ENCODE measurements at regions of chr2 and their contacts with region 1.

Region 1: DNA sequence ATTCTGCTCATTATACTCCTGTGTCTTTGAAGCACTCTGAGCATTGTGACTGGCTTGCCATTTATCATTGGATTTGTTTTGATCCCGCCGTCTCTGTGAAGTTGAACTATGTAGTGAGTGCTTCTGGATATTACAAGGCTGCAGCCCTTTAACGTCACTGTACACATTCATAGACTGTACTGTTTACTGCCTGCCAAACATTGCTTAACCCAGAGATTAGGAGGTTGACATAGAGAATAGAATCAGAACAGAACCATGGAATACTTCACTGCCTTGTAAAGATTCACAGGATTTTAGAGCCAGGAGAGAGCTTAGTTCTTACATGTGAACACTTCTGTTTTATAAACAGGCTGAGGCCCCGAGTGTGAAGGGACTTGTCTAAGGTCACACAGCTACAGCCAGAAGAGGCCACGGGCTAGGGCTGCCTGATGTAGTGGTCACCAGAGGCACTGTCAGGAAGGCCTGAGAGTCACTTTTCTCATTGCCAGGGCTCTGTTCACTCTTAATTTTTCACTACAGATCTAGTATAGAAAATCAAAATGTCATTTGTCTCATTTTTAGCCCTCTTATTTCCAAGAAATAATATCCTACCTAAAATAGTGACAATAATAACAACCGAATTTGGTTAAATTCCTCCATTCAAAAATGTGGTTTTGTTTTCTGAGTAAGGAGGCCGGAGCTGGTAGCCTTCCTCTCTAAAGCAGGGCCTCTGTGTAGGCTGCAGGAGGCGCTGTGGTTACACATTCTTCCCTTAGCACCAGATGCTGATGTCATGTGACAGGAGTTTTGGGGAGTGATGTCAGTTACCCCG is 87.9 kb downstream of the UGGT1 start:
- DNase-seq: peak; percentile 63 to 80 (median 76)
- H3K4me3 ChIP-seq: no peak overlapping the region
- H3K4me3 Mint-ChIP-seq: no peak overlapping the region
- H3K27ac ChIP-seq: peak overlapping the region; percentile 18 to 24
- H3K27ac Mint-ChIP-seq: peak overlapping the region in 5 of 7 donors; percentile 28 to 74 (median 46)
- H3K4me1 ChIP-seq: no peaks in the 10 kb centered on the region
- H3K4me1 Mint-ChIP-seq: peaks cover 3% of the 10 kb centered on the region
- H3K27me3 ChIP-seq: no peaks in the 10 kb centered on the region
- H3K27me3 Mint-ChIP-seq: no peaks in the 10 kb centered on the region
- CTCF ChIP-seq: peak; percentile 80

Region 2: GRCh38 chr2:128027801-128028667 is 150.8 kb before region 1 on chr2 and contains the start of gene SAP130:
- intact Hi-C with region 1: no loop called
- DNase-seq: peak; percentile 92 to 95 (median 93)
- H3K4me3 ChIP-seq: peak within 1 kb of the TSS; percentile 86 to 95 (median 92)
- H3K4me3 Mint-ChIP-seq: peak within 1 kb of the TSS; percentile 93 to 95
- H3K27ac ChIP-seq: peak within 1 kb of the TSS; percentile 58 to 83
- H3K27ac Mint-ChIP-seq: peak within 1 kb of the TSS; percentile 78 to 93 (median 89)
- H3K4me1 ChIP-seq: peaks cover 18 to 19% of the 10 kb centered on the region in 2 donors
- H3K4me1 Mint-ChIP-seq: peaks cover 22% of the 10 kb centered on the region
- H3K27me3 ChIP-seq: no peaks in the 10 kb centered on the region
- H3K27me3 Mint-ChIP-seq: peaks cover 0 to 4% (median 4%) of the 10 kb centered on the region in 3 donors
- CTCF ChIP-seq: no peak
- polyA plus RNA-seq, gene SAP130: 2.8 to 16.4 (median 6.4) TPM

Region 3: DNA sequence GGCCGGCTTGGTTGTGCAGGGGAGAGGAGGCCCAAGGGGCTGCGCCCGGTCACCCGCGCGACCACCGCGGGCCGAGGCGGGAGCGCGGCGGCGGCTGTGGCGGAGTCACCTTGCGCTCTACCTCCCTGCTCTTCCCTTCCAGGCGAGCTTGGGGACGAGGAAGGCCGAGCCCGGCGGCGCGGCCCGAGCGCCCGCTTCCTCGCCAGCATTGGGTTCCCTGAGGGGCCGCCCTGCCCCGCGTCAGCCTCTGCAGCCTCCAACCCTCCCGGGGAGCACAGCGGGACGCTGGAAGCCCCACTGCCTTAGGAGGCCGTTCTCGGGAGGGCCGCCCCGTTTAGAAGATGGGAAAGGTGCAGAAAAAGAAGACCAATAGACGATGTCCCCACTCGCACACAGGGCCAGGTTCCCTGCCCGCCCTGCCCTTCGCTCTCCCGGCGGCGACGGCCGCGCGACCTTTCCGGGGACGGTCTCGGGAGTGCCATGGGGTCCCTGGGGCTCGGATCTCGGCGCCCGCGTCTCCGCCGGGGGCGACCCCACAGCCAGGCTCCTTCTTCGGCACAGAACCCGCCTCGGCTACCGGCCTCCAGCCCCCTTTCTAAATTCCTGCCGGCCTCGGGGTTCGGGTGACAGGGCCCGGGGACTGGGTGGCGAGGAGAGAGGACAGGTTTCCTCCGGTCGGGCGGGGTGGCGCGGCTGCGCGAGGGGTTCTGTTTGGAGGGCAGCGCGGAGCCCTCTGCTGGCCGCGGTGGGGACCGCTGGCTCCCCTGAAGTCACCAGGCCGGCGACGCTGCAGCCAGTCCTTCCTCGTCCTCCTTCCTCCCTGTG is 54.3 kb after region 1 on chr2:
- intact Hi-C with region 1: loop called (anchors 2 kb)
- DNase-seq: peak; percentile 78 to 82 (median 78)
- H3K4me3 ChIP-seq: peak overlapping the region; percentile 51 to 85 (median 81)
- H3K4me3 Mint-ChIP-seq: peak overlapping the region; percentile 81 to 90
- H3K27ac ChIP-seq: peak overlapping the region in 1 of 2 donors; percentile 80
- H3K27ac Mint-ChIP-seq: peak overlapping the region in 4 of 7 donors; percentile 50 to 81 (median 74)
- H3K4me1 ChIP-seq: peaks cover 4 to 12% of the 10 kb centered on the region in 2 donors
- H3K4me1 Mint-ChIP-seq: peaks cover 13% of the 10 kb centered on the region
- H3K27me3 ChIP-seq: peaks cover 0 to 11% of the 10 kb centered on the region in 2 donors
- H3K27me3 Mint-ChIP-seq: peaks cover 10 to 26% (median 14%) of the 10 kb centered on the region in 3 donors
- CTCF ChIP-seq: peak; percentile 93

Region 4: GRCh38 chr2:128520791-128521190 is 341.9 kb after region 1 on chr2:
- intact Hi-C with region 1: loop called in 1 of 2 experiments (anchors 10 kb)
- DNase-seq: peak; percentile 76 to 88 (median 79)
- H3K4me3 ChIP-seq: peak overlapping the region in 1 of 3 experiments; percentile 42
- H3K4me3 Mint-ChIP-seq: peak overlapping the region; percentile 9 to 80
- H3K27ac ChIP-seq: peak overlapping the region in 1 of 2 donors; percentile 70
- H3K27ac Mint-ChIP-seq: peak overlapping the region in 6 of 7 donors; percentile 65 to 86 (median 76)
- H3K4me1 ChIP-seq: peaks cover 22 to 26% of the 10 kb centered on the region in 2 donors
- H3K4me1 Mint-ChIP-seq: peaks cover 24% of the 10 kb centered on the region
- H3K27me3 ChIP-seq: no peaks in the 10 kb centered on the region
- H3K27me3 Mint-ChIP-seq: peaks cover 3 to 6% (median 5%) of the 10 kb centered on the region in 3 donors
- CTCF ChIP-seq: no peak